Naive thymus-derived CD4-positive, alpha-beta T cell (primary cell): ENCODE measurements at regions of chr11 and their contacts with region 1.

Region 1: GRCh38 chr11:11028017-11028692 is 170.3 kb upstream of the ZBED5 start:
- DNase-seq: peak; percentile 59 to 82 (median 72)
- ATAC-seq: peak; percentile 97
- H3K4me3 ChIP-seq: no peak overlapping the region
- H3K4me3 Mint-ChIP-seq: no peak overlapping the region
- H3K27ac ChIP-seq: no peak overlapping the region
- H3K27ac Mint-ChIP-seq: peak overlapping the region in 5 of 9 donors; percentile 2 to 26 (median 12)
- H3K4me1 ChIP-seq: no peaks in the 10 kb centered on the region
- H3K4me1 Mint-ChIP-seq: peaks cover 0 to 6% (median 0%) of the 10 kb centered on the region in 7 donors
- H3K27me3 ChIP-seq: no peaks in the 10 kb centered on the region
- H3K27me3 Mint-ChIP-seq: peaks cover 0 to 32% (median 0%) of the 10 kb centered on the region in 5 donors

Region 2: DNA sequence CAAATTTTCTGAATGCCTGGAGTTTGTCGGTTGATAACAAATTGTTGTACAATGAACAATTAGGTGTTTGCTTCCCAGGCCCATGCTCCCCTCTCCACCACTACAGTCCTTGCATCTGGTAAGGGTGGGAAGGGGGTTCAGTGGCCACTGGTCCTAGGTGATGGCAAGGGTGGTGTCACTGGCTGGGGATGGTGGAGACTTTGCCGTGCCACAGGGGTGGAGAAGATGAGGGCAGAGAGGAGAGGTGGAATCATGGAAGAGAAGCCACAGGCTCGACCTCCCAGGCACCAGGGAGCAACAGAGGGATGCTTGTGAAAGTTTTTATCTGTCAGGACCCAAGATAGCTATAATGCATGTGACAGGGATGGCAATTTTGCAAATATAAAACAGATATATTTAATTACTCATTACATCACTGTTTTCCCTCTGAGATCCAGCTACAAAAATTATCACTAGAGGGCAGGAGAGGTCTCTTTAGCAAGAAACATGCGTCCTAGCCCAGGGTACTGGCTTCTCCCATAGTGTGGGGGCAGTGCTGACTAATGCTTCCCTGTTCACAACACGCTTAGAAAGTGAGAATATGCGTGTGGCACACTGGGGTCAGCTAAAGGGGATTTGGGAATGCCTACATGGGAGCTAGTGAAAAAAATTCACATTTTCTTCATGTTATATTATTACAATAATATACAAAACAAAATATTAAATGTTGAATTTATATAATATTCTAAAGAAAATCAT is 622.1 kb before region 1 on chr11:
- CTCF ChIA-PET with region 1: no interaction called
- POLR2A ChIA-PET with region 1: no interaction called
- intact Hi-C with region 1: loop called in 1 of 2 experiments (anchors 10 kb)
- DNase-seq: peak in 8 of 9 donors; percentile 30 to 56 (median 46)
- ATAC-seq: peak; percentile 82
- H3K4me3 ChIP-seq: no peak overlapping the region
- H3K4me3 Mint-ChIP-seq: no peak overlapping the region
- H3K27ac ChIP-seq: no peak overlapping the region
- H3K27ac Mint-ChIP-seq: peak overlapping the region in 1 of 9 donors; percentile 50
- H3K4me1 ChIP-seq: peaks cover 4 to 12% of the 10 kb centered on the region in 2 donors
- H3K4me1 Mint-ChIP-seq: peaks cover 5 to 34% (median 27%) of the 10 kb centered on the region in 7 donors
- H3K27me3 ChIP-seq: no peaks in the 10 kb centered on the region
- H3K27me3 Mint-ChIP-seq: peaks cover 0 to 2% (median 0%) of the 10 kb centered on the region in 5 donors

Region 3: GRCh38 chr11:10990637-10991193 is 37.4 kb before region 1 on chr11:
- CTCF ChIA-PET with region 1: no interaction called
- POLR2A ChIA-PET with region 1: no interaction called
- intact Hi-C with region 1: no loop called
- DNase-seq: no peak
- ATAC-seq: no peak
- H3K4me3 ChIP-seq: no peak overlapping the region
- H3K4me3 Mint-ChIP-seq: no peak overlapping the region
- H3K27ac ChIP-seq: no peak overlapping the region
- H3K27ac Mint-ChIP-seq: no peak overlapping the region
- H3K4me1 ChIP-seq: no peaks in the 10 kb centered on the region
- H3K4me1 Mint-ChIP-seq: no peaks in the 10 kb centered on the region
- H3K27me3 ChIP-seq: no peaks in the 10 kb centered on the region
- H3K27me3 Mint-ChIP-seq: peaks cover 0 to 9% (median 0%) of the 10 kb centered on the region in 5 donors

Region 4: GRCh38 chr11:11016068-11016467 is 12.1 kb before region 1 on chr11:
- CTCF ChIA-PET with region 1: interaction called, 14 read pairs
- POLR2A ChIA-PET with region 1: interaction called, 3 read pairs
- intact Hi-C with region 1: no loop called
- DNase-seq: no peak
- ATAC-seq: no peak
- H3K4me3 ChIP-seq: no peak overlapping the region
- H3K4me3 Mint-ChIP-seq: no peak overlapping the region
- H3K27ac ChIP-seq: no peak overlapping the region
- H3K27ac Mint-ChIP-seq: no peak overlapping the region
- H3K4me1 ChIP-seq: no peaks in the 10 kb centered on the region
- H3K4me1 Mint-ChIP-seq: no peaks in the 10 kb centered on the region
- H3K27me3 ChIP-seq: no peaks in the 10 kb centered on the region
- H3K27me3 Mint-ChIP-seq: peaks cover 3 to 32% (median 6%) of the 10 kb centered on the region in 5 donors

Region 5: GRCh38 chr11:11207428-11207827 is 179.3 kb after region 1 on chr11:
- CTCF ChIA-PET with region 1: interaction called, 3 read pairs
- POLR2A ChIA-PET with region 1: no interaction called
- intact Hi-C with region 1: loop called in 1 of 2 experiments (anchors 1 kb)
- DNase-seq: peak in 1 of 9 donors; percentile 2
- ATAC-seq: no peak
- H3K4me3 ChIP-seq: no peak overlapping the region
- H3K4me3 Mint-ChIP-seq: no peak overlapping the region
- H3K27ac ChIP-seq: no peak overlapping the region
- H3K27ac Mint-ChIP-seq: no peak overlapping the region
- H3K4me1 ChIP-seq: no peaks in the 10 kb centered on the region
- H3K4me1 Mint-ChIP-seq: no peaks in the 10 kb centered on the region
- H3K27me3 ChIP-seq: no peaks in the 10 kb centered on the region
- H3K27me3 Mint-ChIP-seq: peaks cover 10 to 34% (median 21%) of the 10 kb centered on the region in 5 donors

Region 6: GRCh38 chr11:11735586-11735985 is 707.4 kb after region 1 on chr11:
- CTCF ChIA-PET with region 1: interaction called, 10 read pairs
- POLR2A ChIA-PET with region 1: no interaction called
- intact Hi-C with region 1: no loop called
- DNase-seq: no peak
- ATAC-seq: no peak
- H3K4me3 ChIP-seq: no peak overlapping the region
- H3K4me3 Mint-ChIP-seq: no peak overlapping the region
- H3K27ac ChIP-seq: no peak overlapping the region
- H3K27ac Mint-ChIP-seq: no peak overlapping the region
- H3K4me1 ChIP-seq: no peaks in the 10 kb centered on the region
- H3K4me1 Mint-ChIP-seq: no peaks in the 10 kb centered on the region
- H3K27me3 ChIP-seq: no peaks in the 10 kb centered on the region
- H3K27me3 Mint-ChIP-seq: peaks cover 13 to 18% (median 15%) of the 10 kb centered on the region in 5 donors

Region 7: GRCh38 chr11:11848891-11849746 is 821.0 kb after region 1 on chr11:
- CTCF ChIA-PET with region 1: no interaction called
- POLR2A ChIA-PET with region 1: no interaction called
- intact Hi-C with region 1: loop called in 1 of 2 experiments (anchors 1 kb)
- DNase-seq: peak; percentile 24 to 76 (median 73)
- ATAC-seq: peak; percentile 98
- H3K4me3 ChIP-seq: peak overlapping the region; percentile 26
- H3K4me3 Mint-ChIP-seq: peak overlapping the region in 9 of 10 donors; percentile 47 to 79 (median 56)
- H3K27ac ChIP-seq: no peak overlapping the region
- H3K27ac Mint-ChIP-seq: peak overlapping the region in 8 of 9 donors; percentile 11 to 88 (median 72)
- H3K4me1 ChIP-seq: peaks cover 47 to 65% of the 10 kb centered on the region in 2 donors
- H3K4me1 Mint-ChIP-seq: peaks cover 53 to 75% (median 55%) of the 10 kb centered on the region in 7 donors
- H3K27me3 ChIP-seq: no peaks in the 10 kb centered on the region
- H3K27me3 Mint-ChIP-seq: no peaks in the 10 kb centered on the region